BJ (cell line): ENCODE measurements at regions of chr5 and their contacts with region 1.

Region 1: GRCh38 chr5:65481635-65482295 is at the start of gene ADAMTS6:
- DNase-seq: peak; percentile 81
- H3K4me3 ChIP-seq: peak within 1 kb of the TSS; percentile 56
- H3K27me3 ChIP-seq: no peaks in the 10 kb centered on the region
- CTCF ChIP-seq: no peak
- polyA plus RNA-seq, gene ADAMTS6: 26.2 and 28.0 TPM in 2 replicates

Region 2: GRCh38 chr5:64811050-64811640 is 670.6 kb before region 1 on chr5:
- CTCF ChIA-PET with region 1: interaction called, 26 read pairs
- POLR2A ChIA-PET with region 1: interaction called, 5 read pairs
- DNase-seq: peak; percentile 9
- H3K4me3 ChIP-seq: no peak overlapping the region
- H3K27me3 ChIP-seq: no peaks in the 10 kb centered on the region
- CTCF ChIP-seq: peak; percentile 67

Region 3: GRCh38 chr5:64958757-64959391 is 522.9 kb before region 1 on chr5:
- CTCF ChIA-PET with region 1: interaction called, 11 read pairs
- POLR2A ChIA-PET with region 1: no interaction called
- DNase-seq: no peak
- H3K4me3 ChIP-seq: no peak overlapping the region
- H3K27me3 ChIP-seq: no peaks in the 10 kb centered on the region
- CTCF ChIP-seq: peak; percentile 60

Region 4: DNA sequence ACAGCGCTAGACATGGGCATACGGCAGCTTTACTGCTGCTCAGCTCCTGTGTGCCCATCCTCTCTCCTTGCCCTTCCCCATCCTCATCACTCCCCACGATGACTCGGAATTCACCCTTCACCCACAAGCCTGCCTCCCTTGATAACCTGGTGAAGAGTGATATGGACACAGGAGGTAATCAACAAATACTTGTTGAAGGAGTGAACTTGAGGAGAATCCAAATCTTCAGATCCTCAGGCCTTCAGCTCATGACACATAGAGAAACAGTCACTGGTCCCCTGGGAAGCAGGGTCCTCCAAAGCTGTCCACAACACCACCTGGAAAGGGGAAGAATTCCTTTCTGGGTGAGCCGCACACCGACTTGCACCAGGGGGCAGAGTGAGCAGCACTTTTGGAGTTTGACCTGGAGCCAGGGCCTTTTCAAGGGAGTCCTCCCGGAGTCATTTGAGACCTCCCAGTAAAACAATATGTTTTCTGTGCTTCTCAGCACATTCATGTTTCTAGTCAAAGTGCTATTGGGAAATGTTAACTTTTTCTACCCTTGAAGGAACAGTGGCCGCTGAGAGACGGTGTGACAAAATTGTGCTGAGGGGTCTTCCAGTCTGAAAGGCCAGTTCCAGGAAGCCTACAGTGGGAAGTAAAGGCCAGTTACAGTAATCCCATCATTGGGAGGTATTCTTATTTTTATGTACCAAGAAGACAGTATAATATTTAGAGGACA is 380.7 kb before region 1 on chr5:
- CTCF ChIA-PET with region 1: interaction called, 10 read pairs
- POLR2A ChIA-PET with region 1: interaction called, 9 read pairs
- DNase-seq: peak; percentile 11
- H3K4me3 ChIP-seq: no peak overlapping the region
- H3K27me3 ChIP-seq: no peaks in the 10 kb centered on the region
- CTCF ChIP-seq: peak; percentile 77

Region 5: DNA sequence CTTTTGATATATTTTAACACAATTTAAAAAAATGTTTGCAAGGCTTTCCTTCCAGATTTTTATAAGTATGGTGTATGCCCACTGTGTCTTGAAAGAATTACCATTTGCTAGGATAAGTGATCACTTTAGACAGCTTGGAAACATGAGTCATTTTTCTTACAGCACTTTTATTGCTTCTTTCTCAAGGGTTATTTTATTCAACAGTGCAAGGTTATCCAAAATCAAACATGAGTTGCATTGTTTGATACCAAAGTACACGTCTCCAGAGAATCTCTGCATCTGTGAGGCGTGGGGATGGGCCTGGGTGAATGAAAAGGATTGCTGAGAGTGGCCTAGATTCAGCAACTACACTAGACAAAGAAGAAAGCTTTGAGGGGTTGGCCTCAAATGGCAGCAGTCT is 329.6 kb before region 1 on chr5:
- CTCF ChIA-PET with region 1: no interaction called
- POLR2A ChIA-PET with region 1: interaction called, 26 read pairs
- DNase-seq: peak; percentile 74
- H3K4me3 ChIP-seq: no peak overlapping the region
- H3K27me3 ChIP-seq: no peaks in the 10 kb centered on the region
- CTCF ChIP-seq: no peak